ENCODE measurements at regions of chr10 and their contacts with region 1.

Region 1: DNA sequence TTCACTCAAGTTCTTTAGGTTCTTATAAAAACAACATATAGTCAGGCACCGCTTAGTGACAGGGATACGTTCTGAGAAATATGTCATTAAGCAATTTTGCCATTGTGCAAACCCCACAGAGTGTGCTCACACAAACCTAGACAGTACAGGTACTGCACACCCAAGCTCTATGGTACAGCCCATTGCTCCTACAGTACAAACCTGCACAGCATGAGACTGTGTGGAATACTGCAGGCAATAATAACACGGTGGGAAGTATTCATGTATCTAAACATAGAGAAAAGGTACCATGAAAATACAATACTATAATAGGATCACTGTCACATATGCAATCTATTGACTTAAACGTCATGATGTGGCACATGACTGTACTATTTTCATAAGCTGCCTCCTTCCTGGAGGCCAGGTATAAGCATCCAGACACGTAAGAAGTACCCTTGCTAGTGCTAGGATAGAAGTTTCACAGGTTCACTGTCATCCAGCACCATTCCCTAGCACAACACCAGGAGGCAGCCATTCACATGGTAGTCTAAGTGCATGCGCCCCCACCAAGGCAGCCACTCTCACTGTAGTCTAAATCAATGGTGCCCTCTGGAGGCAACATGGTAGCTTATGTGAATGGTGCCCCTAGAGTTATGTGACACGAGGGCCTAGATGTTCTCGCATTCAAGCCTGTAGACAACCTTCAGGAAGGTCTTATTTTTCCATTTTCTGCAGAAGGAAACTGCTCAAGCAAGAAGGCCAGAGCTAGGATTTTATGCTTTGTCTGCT is 98.5 kb downstream of the ARHGAP22 start:
- DNase-seq: peak; percentile 34
- H3K4me3 ChIP-seq: no peak overlapping the region
- H3K27ac ChIP-seq: no peak overlapping the region
- H3K4me1 ChIP-seq: no peaks in the 10 kb centered on the region
- CTCF ChIP-seq: peak; percentile 63

Region 2: GRCh38 chr10:48215488-48216204 is 290.7 kb before region 1 on chr10:
- CTCF ChIA-PET with region 1: no interaction called
- POLR2A ChIA-PET with region 1: no interaction called
- intact Hi-C with region 1: loop called (anchors 5 kb)
- DNase-seq: peak; percentile 46
- H3K4me3 ChIP-seq: no peak overlapping the region
- H3K27ac ChIP-seq: no peak overlapping the region
- H3K4me1 ChIP-seq: no peaks in the 10 kb centered on the region
- CTCF ChIP-seq: peak; percentile 91

Region 3: GRCh38 chr10:48363617-48364355 is 142.5 kb before region 1 on chr10:
- CTCF ChIA-PET with region 1: no interaction called
- POLR2A ChIA-PET with region 1: no interaction called
- intact Hi-C with region 1: loop called (anchors 10 kb)
- DNase-seq: peak; percentile 55
- H3K4me3 ChIP-seq: no peak overlapping the region
- H3K27ac ChIP-seq: no peak overlapping the region
- H3K4me1 ChIP-seq: no peaks in the 10 kb centered on the region
- CTCF ChIP-seq: peak; percentile 90

Region 4: DNA sequence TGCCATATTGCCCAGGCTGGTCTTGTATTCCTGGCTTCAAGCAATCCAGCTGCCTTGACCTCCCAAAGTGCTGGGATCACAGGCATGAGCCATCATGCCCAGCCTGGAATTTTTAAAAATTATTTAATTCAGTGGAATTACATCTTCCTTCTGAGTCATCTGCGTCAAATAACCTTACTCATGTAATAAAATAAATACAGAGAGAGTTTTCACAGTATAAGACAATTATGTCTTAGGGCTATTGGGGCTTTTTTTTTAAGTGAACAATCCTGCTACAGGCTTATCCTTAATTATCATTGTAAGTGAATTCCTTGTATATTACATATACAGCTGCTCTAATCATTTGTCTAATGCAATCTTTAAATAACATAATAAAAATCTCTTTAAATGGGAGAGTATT is 91.6 kb before region 1 on chr10:
- CTCF ChIA-PET with region 1: no interaction called
- POLR2A ChIA-PET with region 1: no interaction called
- intact Hi-C with region 1: no loop called
- DNase-seq: no peak
- H3K4me3 ChIP-seq: no peak overlapping the region
- H3K27ac ChIP-seq: no peak overlapping the region
- H3K4me1 ChIP-seq: no peaks in the 10 kb centered on the region
- CTCF ChIP-seq: no peak

Measured in OCI-LY7 (cell line).